ENCODE measurements at regions of chr11 and their contacts with region 1.

Region 1: DNA sequence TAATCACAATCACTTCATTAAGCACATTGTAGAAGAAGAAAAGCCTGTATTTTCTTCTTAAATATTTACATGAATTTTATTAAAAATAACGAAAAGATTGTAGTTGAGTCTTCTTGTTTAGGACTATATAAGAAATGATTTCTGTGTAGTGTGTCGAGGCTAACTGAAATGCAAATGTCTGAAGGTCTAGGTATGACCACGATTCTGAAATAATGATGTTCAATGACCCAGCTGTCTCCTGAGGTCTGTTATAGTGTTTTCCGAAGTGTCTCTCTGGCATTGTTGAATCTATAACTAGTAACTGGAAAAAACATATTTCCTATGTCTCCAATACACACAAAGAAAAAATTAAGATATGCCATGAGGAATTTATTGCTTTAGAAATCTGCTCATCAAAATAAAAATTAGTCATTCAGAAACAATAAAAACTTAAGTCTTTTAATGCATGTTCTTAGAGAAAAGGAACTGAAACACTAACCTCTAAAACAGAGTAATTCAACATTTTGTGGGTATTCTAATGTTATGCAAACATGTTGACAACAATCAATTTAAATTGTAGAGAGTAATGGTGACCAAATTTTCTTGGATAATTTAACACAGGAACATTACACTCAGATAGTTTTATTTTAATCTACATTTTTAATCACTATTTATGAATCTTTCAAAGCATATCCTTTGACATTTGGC is 55.0 kb downstream of the CASP12 start:
- DNase-seq: no peak
- ATAC-seq: no peak
- H3K4me3 ChIP-seq: no peak overlapping the region
- H3K27ac ChIP-seq: no peak overlapping the region
- H3K4me1 ChIP-seq: no peaks in the 10 kb centered on the region
- H3K27me3 ChIP-seq: no peaks in the 10 kb centered on the region
- CTCF ChIP-seq: no peak

Region 2: GRCh38 chr11:104918113-104918824 is 75.0 kb after region 1 on chr11:
- CTCF ChIA-PET with region 1: no interaction called
- POLR2A ChIA-PET with region 1: no interaction called
- intact Hi-C with region 1: loop called (anchors 5 kb)
- DNase-seq: peak; percentile 64
- ATAC-seq: peak; percentile 79
- H3K4me3 ChIP-seq: peak overlapping the region; percentile 64
- H3K27ac ChIP-seq: peak overlapping the region; percentile 19
- H3K4me1 ChIP-seq: peaks cover 9% of the 10 kb centered on the region; the same call in 1 of the 2 replicates
- H3K27me3 ChIP-seq: no peaks in the 10 kb centered on the region
- CTCF ChIP-seq: no peak